ENCODE measurements at regions of chr6 and their contacts with region 1.

Region 1: DNA sequence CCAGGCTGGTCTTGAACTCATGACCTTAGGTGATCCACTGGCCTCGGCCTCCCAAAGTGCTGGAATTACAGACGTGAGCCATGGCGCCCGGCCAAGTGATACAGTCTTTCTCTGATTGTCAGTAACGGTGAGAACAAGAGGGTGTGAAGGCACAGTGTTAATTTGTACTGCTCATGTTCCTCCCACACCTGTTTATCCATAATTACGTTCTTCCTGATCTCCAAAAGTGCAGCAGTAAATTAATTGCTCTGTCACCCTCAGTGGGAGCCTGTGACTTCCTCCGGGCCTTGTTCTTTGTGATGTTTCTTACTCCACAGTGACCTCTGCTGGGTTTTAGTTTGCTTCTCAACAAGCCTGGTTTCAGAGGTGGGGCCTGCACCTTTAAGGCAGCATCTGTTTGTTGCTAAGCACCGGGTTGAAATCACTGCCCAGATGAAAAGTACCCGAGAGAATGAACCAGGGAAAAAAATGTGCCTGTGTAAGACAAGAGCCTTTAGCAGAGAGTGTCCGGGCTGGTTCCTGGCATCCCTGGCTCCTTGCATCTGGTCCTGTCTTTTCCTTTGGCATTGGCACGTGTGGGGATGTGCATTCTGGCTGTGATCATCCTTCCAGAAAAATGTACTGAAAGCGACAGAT is 89.1 kb upstream of the CLDN20 start:
- DNase-seq: peak; percentile 29 to 57
- ATAC-seq: peak; percentile 81 to 94
- H3K4me3 ChIP-seq: no peak overlapping the region
- H3K27ac ChIP-seq: peak overlapping the region; percentile 44 to 70 (median 55)
- H3K4me1 ChIP-seq: peaks cover 0 to 11% of the 10 kb centered on the region in 2 donors
- H3K27me3 ChIP-seq: no peaks in the 10 kb centered on the region
- CTCF ChIP-seq: peak; percentile 48 to 69 (median 58)
- POLR2A ChIP-seq: no peak

Region 2: GRCh38 chr6:154868143-154868594 is 306.5 kb before region 1 on chr6:
- in situ Hi-C with region 1: no loop called
- intact Hi-C with region 1: loop called (anchors 2 kb)
- DNase-seq: no peak
- ATAC-seq: peak; percentile 59 to 61
- H3K4me3 ChIP-seq: no peak overlapping the region
- H3K27ac ChIP-seq: no peak overlapping the region
- H3K4me1 ChIP-seq: peaks cover 5 to 7% of the 10 kb centered on the region in 2 donors
- H3K27me3 ChIP-seq: no peaks in the 10 kb centered on the region
- CTCF ChIP-seq: peak; percentile 40 to 71 (median 61)
- POLR2A ChIP-seq: no peak

Region 3: DNA sequence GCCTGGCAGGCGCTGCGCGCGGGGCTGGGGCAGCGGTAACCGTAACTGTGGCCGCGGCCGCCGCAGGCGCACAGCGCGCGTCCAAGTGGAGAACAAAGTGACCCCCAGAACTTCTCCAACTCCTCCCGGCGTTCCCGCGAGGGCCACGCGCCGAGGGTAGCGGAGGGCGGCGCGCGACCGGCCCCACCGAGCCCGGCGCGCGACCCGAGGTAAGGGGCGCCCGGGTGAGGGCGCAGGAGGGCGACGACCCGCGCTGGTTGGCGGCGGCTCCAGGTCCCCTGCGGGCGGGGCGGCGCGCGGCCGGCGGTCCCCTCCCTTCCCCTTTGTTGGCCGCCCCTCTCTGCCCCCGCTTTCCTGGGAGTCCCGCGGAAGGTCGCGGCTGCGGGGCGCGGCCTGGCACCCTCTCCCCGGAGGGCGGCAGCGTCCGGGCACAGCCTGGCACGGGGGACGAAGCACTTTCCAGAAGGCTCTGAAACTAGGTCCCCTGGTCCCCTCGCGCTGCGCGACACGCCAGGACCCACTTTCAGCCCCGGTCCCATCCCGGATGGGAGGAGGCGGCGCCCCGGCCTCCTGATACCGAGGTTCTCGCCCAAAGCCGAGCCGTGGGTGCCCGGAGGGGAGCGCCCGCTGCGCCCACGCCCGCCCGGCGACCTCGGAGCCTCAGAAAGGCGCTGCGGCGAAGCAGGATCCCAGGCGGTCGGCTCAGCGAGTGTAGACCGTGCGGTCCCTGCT is 179.2 kb before region 1 on chr6 and contains the start of gene TIAM2:
- in situ Hi-C with region 1: no loop called
- intact Hi-C with region 1: loop called (anchors 2 kb)
- DNase-seq: no peak
- ATAC-seq: peak; percentile 61 to 72
- H3K4me3 ChIP-seq: peak within 1 kb of the TSS; percentile 50 to 85 (median 68)
- H3K27ac ChIP-seq: peak within 1 kb of the TSS; percentile 2 to 59 (median 44)
- H3K4me1 ChIP-seq: peaks cover 0 to 14% of the 10 kb centered on the region in 2 donors
- H3K27me3 ChIP-seq: no peaks in the 10 kb centered on the region
- CTCF ChIP-seq: peak in 1 of 5 experiments; percentile 13
- POLR2A ChIP-seq: no peak
- total RNA-seq, gene TIAM2: 4.4 to 18.8 (median 13.6) TPM

Region 4: DNA sequence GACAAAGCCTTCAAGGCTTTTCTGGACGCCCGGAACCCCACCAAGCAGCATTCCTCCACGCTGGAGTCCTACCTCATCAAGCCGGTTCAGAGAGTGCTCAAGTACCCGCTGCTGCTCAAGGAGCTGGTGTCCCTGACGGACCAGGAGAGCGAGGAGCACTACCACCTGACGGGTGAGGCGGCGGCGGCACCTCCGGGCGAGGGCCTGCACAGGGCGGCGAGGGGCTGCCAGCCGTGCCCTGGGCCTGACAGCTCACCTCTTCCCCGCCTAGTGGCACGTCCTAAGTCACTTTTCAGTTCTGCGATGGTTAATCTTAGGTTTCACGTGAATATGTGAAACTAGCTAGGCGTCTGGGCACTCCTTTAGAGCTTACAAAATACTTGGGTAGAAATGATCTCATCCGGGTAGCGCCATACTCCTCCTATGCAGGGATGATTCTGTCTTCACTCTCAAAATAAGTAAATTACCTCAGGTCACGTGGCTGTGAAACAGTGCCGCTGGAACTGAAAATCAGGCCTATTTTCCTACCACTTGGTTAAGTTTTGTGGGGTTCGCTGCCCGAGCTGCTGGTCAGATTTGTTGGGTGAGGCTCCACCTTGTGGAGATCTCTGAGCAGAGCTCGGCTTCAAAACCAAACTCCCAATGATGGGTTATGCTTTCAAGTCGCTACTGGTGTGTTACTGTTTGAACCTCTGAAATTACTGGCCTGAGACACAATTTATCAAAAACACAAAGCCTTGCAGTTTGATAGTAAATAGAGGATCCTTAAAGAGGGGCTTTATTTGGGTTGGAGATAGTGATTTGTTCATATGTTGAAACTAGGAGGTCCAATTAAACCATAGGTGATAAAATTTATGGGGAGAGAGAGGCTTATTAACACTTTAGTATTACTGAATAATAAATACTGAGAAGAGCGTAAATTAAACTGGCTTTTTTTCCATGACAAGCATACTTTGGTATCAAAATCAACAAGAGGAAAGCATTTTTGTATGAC is 73.6 kb after region 1 on chr6:
- in situ Hi-C with region 1: loop called in 2 of 4 experiments (anchors 10 kb)
- intact Hi-C with region 1: loop called (anchors 1 kb)
- DNase-seq: no peak
- ATAC-seq: no peak
- H3K4me3 ChIP-seq: no peak overlapping the region
- H3K27ac ChIP-seq: no peak overlapping the region
- H3K4me1 ChIP-seq: peaks cover 4 to 8% of the 10 kb centered on the region in 2 donors
- H3K27me3 ChIP-seq: no peaks in the 10 kb centered on the region
- CTCF ChIP-seq: peak; percentile 21 to 51 (median 40)
- POLR2A ChIP-seq: no peak

Region 5: DNA sequence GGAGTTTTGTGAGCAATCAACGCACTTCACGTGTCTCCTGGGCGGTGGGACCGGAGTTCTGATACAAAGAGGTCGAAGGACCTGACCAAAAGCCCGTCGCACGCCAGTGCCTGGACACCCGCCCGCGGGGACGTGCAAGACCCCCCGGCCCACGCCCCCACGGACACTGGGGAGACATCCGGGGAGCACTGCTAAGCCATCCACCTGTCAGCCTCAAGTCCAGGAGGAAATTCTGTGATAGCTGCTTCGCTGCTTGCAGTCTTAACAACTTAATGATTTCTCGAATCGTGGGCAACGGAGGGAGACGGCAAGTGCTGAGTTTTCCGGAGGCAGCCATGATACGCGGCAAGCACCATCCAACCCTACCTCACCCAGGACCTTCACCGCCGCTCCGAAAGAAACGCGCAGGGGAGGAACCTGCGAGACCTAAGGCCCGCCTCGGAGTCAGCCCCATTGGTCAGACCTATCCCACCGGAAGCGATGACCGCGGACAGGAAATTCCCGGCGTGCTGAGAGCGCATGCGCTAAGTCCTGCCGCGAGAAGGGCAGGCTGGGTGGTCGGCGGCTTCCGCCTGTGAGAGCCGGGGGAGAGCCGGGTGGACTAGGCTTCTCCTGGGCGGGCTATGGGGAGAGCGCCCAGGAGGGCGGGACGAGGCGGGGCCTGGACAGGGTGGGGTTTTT is 139.5 kb after region 1 on chr6 and contains the start of gene TFB1M:
- in situ Hi-C with region 1: no loop called
- intact Hi-C with region 1: loop called (anchors 5 kb)
- DNase-seq: peak; percentile 98
- ATAC-seq: peak; percentile 90 to 91
- H3K4me3 ChIP-seq: peak within 1 kb of the TSS; percentile 84 to 95 (median 88)
- H3K27ac ChIP-seq: peak within 1 kb of the TSS; percentile 87 to 93 (median 91)
- H3K4me1 ChIP-seq: peaks cover 3 to 11% of the 10 kb centered on the region in 2 donors
- H3K27me3 ChIP-seq: no peaks in the 10 kb centered on the region
- CTCF ChIP-seq: no peak
- POLR2A ChIP-seq: peak; percentile 94
- total RNA-seq, gene TFB1M: 13.4 to 34.4 (median 29.2) TPM